Gastrocnemius medialis (tissue), 4 donors: ENCODE measurements at regions of chr6 and their contacts with region 1.

Region 1: DNA sequence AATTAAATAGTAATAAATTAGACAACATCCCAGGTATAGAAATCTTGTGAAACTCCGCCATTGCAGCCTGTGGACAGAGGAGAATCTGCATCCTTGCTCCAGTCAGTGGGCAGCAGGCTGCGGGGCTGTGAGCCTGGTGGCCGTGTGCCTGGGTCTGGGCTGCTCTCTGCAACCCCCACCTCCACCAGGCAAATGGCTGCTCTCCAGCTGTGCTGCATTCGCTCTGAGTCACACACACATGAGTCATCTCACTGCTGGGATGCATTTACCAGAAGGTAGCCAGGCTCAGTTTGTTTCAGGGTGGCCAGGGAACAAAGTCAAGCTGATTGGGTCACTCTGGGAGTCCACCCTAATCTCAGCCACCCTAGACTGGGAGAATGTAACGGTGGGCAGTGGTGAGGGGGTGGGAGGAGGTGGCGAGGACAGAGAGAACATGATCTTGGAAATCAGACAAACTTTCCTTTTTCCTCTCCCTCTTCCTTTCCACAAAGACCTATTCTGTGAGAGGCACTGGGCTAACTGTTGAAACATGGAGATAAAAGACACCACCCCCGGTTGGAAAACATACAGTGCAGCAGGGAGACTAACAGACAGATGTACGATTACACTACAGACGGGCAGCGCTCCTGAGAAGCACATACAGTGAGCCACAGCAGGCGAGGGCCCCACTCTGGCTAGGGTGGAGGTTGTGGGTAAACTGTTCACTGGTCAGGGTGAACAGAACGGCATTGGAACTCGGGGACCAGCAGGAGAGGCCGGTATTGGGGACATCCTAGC is 59.2 kb downstream of the TRAM2 start:
- DNase-seq: peak; percentile 89 to 91
- ATAC-seq: peak; percentile 99
- H3K4me3 ChIP-seq: no peak overlapping the region
- H3K27ac ChIP-seq: peak overlapping the region; percentile 72 to 82 (median 80)
- H3K4me1 ChIP-seq: peaks cover 27 to 36% of the 10 kb centered on the region in 2 donors
- H3K27me3 ChIP-seq: no peaks in the 10 kb centered on the region
- CTCF ChIP-seq: no peak
- POLR2A ChIP-seq: peak; percentile 16 to 54

Region 2: DNA sequence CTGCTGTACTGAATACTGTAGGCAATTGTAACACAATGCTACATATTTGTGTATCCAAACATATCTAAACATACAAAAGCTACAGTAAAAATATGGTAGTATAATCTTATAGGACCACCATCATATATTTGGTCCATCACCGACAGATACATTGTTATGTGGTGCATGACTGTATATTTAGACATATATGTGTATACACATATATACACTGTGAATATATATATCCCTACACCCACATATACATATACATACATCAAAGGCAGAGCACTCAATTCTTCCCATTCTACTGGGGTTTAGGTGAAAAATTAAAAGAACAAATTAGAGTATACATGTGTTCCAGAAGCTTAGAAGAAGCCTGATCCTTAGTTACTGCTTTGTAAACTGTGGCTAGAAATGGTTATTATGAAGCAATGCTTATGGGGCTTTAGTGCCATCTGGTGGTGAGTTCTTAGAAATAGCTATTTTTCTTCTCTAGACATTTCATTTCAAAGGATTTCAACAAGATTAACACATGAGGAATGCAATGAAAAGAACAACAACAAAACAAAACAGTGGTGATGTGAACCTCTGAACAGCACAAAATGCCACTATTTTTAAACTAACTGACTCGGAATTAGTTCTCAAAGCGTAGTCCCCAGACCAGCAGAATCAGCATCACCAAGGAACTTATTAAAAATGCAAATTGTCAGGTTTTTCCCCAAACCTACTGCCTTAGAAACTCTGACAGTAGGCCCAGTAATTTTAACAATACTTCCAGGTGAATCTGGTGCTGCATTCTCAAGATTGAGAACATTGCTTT is 468.2 kb before region 1 on chr6:
- in situ Hi-C with region 1: no loop called
- intact Hi-C with region 1: no loop called
- DNase-seq: no peak
- ATAC-seq: no peak
- H3K4me3 ChIP-seq: no peak overlapping the region
- H3K27ac ChIP-seq: no peak overlapping the region
- H3K4me1 ChIP-seq: no peaks in the 10 kb centered on the region
- H3K27me3 ChIP-seq: no peaks in the 10 kb centered on the region
- CTCF ChIP-seq: peak in 4 of 5 experiments; percentile 7 to 51 (median 28)
- POLR2A ChIP-seq: no peak

Region 3: DNA sequence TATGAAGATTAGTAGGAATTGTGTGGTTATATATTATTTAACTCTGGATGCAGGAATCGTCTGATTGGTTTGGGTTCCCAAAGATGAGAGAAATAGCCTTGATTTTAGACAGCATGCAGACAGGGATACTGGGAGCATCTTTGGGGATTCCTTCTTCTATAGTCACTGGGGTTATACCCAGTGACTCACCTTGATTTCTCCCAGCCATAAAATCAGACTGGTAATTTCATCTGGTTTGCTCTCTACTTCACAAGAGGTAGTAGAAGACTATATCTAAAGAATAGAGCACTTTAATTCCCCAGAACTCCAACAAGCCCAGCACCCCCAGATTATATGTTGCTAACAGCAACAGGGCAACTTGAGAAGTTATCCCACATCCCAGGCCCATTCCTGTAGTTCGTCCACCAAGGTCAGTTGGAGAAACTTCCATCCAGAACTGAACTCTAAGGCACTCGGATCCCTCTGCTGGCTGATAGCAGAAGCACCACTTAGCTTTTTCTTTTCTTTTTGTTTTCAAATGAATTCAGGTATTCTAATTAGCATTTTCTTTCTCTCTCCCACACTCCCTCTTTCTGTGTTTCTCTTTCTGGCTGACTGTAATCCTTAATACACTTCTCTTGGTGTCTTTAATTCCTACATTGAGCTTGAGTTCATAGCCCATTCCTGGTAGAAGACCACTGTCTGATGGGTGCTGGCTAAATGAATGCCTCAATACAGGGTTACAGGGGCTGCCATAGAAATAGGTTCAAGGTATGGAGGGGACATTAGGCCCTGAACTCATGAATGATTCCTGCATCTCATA is 118.0 kb before region 1 on chr6:
- in situ Hi-C with region 1: no loop called
- intact Hi-C with region 1: no loop called
- DNase-seq: no peak
- ATAC-seq: no peak
- H3K4me3 ChIP-seq: no peak overlapping the region
- H3K27ac ChIP-seq: no peak overlapping the region
- H3K4me1 ChIP-seq: no peaks in the 10 kb centered on the region
- H3K27me3 ChIP-seq: no peaks in the 10 kb centered on the region
- CTCF ChIP-seq: peak; percentile 11 to 57 (median 24)
- POLR2A ChIP-seq: no peak

Region 4: GRCh38 chr6:52566853-52567279 is 49.2 kb after region 1 on chr6:
- in situ Hi-C with region 1: loop called in 1 of 4 experiments (anchors 10 kb)
- intact Hi-C with region 1: loop called (anchors 2 kb)
- DNase-seq: peak; percentile 23 to 66
- ATAC-seq: peak; percentile 69 to 85
- H3K4me3 ChIP-seq: no peak overlapping the region
- H3K27ac ChIP-seq: peak overlapping the region; percentile 46 to 64 (median 48)
- H3K4me1 ChIP-seq: peaks cover 34 to 41% of the 10 kb centered on the region in 2 donors
- H3K27me3 ChIP-seq: no peaks in the 10 kb centered on the region
- CTCF ChIP-seq: no peak
- POLR2A ChIP-seq: no peak

Region 5: GRCh38 chr6:53220605-53221004 is 702.9 kb after region 1 on chr6:
- in situ Hi-C with region 1: no loop called
- intact Hi-C with region 1: no loop called
- DNase-seq: no peak
- ATAC-seq: no peak
- H3K4me3 ChIP-seq: no peak overlapping the region
- H3K27ac ChIP-seq: no peak overlapping the region
- H3K4me1 ChIP-seq: no peaks in the 10 kb centered on the region
- H3K27me3 ChIP-seq: no peaks in the 10 kb centered on the region
- CTCF ChIP-seq: no peak
- POLR2A ChIP-seq: no peak